ENCODE measurements at regions of chr7 and their contacts with region 1.

Region 1: GRCh38 chr7:5766321-5766761 is 15.1 kb downstream of the RNF216 start:
- DNase-seq: no peak
- H3K4me3 ChIP-seq: no peak overlapping the region
- H3K27ac ChIP-seq: no peak overlapping the region
- H3K4me1 ChIP-seq: no peaks in the 10 kb centered on the region
- CTCF ChIP-seq: no peak

Region 2: DNA sequence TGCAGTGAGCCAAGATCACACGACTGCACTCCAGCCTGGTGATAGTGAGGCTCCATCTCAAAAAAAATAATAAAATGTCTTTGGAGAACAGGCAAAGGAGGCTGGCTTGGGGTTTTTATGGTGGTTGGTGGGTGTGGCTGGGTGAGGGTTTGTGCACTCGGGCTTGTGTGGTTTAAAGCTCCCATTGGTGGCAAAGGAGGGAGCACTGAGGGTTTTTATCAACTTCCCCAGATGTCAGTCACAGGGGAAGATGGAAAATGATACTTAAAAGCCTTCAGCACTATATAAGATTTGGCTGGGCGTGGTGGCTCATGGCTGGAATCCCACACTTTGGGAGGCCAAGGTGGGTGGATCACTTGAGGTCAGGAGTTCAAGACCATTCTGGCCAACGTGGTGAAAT is 31.4 kb after region 1 on chr7:
- CTCF ChIA-PET with region 1: no interaction called
- POLR2A ChIA-PET with region 1: interaction called, 12 read pairs
- intact Hi-C with region 1: no loop called
- DNase-seq: no peak
- H3K4me3 ChIP-seq: no peak overlapping the region
- H3K27ac ChIP-seq: no peak overlapping the region
- H3K4me1 ChIP-seq: no peaks in the 10 kb centered on the region
- CTCF ChIP-seq: no peak